Naive thymus-derived CD8-positive, alpha-beta T cell (primary cell): ENCODE measurements at regions of chr4 and their contacts with region 1.

Region 1: DNA sequence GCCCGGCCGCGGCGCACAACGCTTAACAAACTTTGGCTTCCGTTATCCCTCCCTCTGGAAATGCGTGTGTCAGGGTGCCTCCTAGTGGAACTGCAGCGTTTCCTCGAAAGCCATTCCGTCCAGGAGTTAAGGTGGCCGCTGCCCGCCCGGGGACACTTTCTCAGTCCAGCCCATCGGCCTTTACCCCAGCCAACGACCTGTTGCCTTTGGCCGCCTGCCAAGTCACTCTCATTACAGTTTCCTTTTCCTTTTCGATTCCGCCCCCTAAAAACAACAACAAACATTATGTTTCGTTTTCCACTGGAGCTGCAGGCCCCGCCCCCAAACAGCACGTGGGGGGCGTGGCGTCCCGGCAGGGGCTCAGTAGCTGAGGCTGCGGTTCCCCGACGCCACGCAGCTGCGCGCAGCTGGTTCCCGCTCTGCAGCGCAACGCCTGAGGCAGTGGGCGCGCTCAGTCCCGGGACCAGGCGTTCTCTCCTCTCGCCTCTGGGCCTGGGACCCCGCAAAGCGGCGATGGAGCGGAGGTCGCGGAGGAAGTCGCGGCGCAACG is at the start of gene HERC5:
- DNase-seq: peak; percentile 86 to 94 (median 90)
- ATAC-seq: peak; percentile 95 to 96
- H3K4me3 Mint-ChIP-seq: peak within 1 kb of the TSS; percentile 87 to 100 (median 100)
- H3K27ac Mint-ChIP-seq: peak within 1 kb of the TSS; percentile 96 to 100 (median 98)
- H3K4me1 Mint-ChIP-seq: peaks cover 6 to 41% (median 24%) of the 10 kb centered on the region in 4 donors
- H3K27me3 Mint-ChIP-seq: no peaks in the 10 kb centered on the region
- polyA plus RNA-seq, gene HERC5: 5.7 to 7.3 (median 6.5) TPM

Region 2: DNA sequence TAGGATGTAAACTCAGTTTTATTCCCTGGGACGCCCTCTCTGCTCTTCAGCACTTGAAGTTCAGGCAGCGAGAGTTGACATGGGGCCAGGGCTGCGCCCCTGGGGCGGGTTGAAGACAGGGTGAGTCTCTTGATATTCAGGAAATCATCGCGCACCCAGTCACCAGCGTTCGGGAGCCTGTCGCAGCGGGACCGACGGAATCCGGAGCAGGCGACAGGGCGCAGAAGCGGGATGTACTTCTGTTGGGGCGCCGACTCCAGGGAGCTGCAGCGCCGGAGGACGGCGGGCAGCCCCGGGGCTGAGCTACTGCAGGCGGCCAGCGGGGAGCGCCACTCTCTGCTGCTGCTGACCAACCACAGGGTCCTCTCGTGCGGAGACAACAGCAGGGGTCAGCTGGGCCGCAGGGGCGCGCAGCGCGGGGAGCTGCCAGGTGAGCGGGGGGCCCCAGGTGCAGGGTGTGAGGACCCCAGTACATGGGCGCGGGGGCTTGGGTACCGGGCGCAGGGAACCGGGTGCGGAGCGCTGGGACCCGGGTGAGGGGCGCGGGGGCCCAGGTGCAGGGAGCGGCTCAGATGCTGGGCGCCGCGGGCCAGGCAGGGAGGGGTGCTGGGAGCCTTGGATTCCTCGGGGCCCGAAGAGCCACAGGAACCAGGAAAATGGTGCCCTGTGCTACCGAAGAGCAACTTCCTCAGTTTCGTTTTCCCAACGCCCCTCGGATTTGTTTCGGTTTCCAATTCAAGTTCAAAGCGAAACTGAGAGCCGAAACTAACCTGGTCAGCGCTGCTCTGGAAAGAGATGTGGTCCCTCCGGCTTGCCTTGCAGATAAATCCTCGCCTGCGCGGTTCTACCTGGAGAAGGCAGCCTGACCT is 77.9 kb before region 1 on chr4 and contains the start of gene HERC6:
- POLR2A ChIA-PET with region 1: interaction called, 33 read pairs
- DNase-seq: peak; percentile 43 to 80 (median 68)
- ATAC-seq: peak; percentile 69 to 74
- H3K4me3 Mint-ChIP-seq: peak within 1 kb of the TSS; percentile 90 to 97 (median 96)
- H3K27ac Mint-ChIP-seq: peak within 1 kb of the TSS; percentile 90 to 98 (median 96)
- H3K4me1 Mint-ChIP-seq: peaks cover 16 to 47% (median 38%) of the 10 kb centered on the region in 4 donors
- H3K27me3 Mint-ChIP-seq: no peaks in the 10 kb centered on the region
- polyA plus RNA-seq, gene HERC6: 10.8 to 18.4 (median 18.1) TPM

Region 3: DNA sequence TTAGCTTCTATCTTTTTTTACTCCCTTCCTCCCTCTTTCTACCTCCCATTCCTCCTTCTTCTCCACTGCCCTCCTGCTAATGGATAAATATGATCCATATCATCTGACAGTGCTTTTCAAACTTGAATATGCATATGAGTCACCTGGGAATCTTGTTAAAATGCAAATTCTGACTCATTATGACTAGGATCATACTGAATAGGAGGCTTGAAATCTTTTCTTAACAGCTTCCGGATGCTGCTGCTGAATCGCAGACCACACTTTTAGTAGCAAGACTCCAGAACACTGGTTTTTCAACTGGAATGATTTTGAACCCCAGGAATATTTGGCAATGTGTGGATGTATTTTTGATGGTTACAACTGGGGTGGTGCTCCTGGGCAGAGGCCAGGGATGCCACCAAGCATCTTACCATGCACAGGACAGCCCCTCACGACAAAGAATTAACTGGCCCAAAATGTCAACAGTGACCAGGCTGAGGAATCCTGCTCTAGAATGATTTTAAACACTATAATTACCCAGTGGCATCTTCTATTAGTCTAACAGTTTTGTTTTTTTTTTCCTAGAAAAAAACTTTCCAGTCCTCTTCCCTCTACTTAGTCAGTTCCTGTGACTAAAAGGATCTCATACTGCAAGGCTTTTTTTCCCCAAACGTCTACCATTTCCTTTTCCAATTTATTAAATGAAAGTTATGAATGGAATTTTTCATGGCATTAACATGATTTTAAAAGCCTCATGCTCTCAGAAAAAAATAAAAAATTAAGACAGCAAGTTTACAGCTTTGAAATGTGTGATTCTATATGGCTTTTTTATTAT is 77.3 kb after region 1 on chr4:
- POLR2A ChIA-PET with region 1: no interaction called
- DNase-seq: no peak
- ATAC-seq: no peak
- H3K4me3 Mint-ChIP-seq: no peak overlapping the region
- H3K27ac Mint-ChIP-seq: no peak overlapping the region
- H3K4me1 Mint-ChIP-seq: peaks cover 0 to 1% (median under 1%) of the 10 kb centered on the region in 4 donors
- H3K27me3 Mint-ChIP-seq: no peaks in the 10 kb centered on the region